Activated CD8-positive, alpha-beta memory T cell treated with anti-CD3 and anti-CD28 coated beads, Interleukin-2, amount 10 ng/mL, durations not matched to agents 7 days and 5 days (primary cell): ENCODE measurements at regions of chr3 and their contacts with region 1.

Region 1: DNA sequence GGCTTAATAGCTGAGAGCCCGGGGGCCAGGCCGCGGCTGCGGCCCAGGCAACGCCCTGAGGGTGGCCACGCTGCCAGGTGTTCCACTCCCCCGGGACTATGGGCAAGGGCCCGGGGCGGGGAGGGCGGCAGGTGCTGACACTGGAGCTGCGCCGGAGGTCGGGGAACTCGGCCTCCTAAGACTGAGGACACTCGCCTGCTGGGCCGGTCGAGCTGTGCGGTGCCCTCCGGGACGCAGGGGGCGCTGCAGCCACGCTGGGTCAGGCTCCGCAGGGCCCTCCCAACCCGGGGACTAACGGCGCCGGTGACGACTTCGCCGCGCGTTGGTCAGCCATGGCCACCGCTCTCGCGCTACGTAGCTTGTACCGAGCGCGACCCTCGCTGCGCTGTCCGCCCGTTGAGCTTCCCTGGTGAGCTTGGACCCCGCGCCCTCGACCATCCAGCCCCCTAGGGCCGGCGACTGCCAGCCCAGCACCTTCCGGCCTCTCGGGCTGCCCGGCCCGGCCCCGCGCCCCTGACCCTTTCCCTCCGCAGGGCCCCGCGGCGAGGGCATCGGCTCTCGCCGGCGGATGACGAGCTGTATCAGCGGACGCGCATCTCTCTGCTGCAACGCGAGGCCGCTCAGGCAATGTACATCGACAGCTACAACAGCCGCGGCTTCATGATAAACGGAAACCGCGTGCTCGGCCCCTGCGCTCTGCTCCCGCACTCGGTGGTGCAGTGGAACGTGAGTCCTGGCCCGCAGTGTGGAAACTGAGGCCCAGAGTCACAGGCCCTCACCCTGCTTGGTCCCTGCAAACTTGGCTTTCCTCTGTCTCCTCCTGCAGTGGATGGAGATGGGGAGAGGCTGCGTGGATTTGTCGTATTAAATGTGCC is at the start of gene NDUFAF3:
- DNase-seq: peak; percentile 95
- ATAC-seq: peak; percentile 72
- H3K4me3 Mint-ChIP-seq: peak within 1 kb of the TSS; percentile 90
- H3K27ac Mint-ChIP-seq: peak within 1 kb of the TSS; percentile 98
- H3K4me1 Mint-ChIP-seq: peaks cover 61% of the 10 kb centered on the region
- H3K27me3 Mint-ChIP-seq: no peaks in the 10 kb centered on the region
- total RNA-seq, gene NDUFAF3: 94.3 to 101 TPM

Region 2: DNA sequence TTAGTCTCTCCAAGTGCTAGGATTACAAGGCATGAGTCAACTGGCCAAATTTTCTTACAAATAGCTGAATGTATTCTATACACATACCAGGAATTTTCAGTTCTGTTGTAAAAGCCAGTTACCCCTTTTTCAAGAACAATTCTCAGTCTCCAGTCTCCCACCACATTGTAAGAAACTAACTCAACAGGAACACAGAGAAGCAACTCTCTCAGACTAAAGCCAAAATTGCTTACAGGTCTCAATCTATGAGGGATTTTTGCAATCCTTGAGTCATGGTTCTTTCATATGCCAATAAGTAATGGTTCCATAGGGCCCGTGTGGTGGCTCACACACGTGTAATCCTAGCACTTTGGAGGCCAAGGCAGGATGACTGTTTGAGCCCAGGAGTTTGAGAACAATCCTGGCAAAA is 313.6 kb before region 1 on chr3:
- CTCF ChIA-PET with region 1: no interaction called
- DNase-seq: no peak
- ATAC-seq: no peak
- H3K4me3 Mint-ChIP-seq: no peak overlapping the region
- H3K27ac Mint-ChIP-seq: peak overlapping the region; percentile 37
- H3K4me1 Mint-ChIP-seq: peaks cover 39% of the 10 kb centered on the region
- H3K27me3 Mint-ChIP-seq: no peaks in the 10 kb centered on the region

Region 3: DNA sequence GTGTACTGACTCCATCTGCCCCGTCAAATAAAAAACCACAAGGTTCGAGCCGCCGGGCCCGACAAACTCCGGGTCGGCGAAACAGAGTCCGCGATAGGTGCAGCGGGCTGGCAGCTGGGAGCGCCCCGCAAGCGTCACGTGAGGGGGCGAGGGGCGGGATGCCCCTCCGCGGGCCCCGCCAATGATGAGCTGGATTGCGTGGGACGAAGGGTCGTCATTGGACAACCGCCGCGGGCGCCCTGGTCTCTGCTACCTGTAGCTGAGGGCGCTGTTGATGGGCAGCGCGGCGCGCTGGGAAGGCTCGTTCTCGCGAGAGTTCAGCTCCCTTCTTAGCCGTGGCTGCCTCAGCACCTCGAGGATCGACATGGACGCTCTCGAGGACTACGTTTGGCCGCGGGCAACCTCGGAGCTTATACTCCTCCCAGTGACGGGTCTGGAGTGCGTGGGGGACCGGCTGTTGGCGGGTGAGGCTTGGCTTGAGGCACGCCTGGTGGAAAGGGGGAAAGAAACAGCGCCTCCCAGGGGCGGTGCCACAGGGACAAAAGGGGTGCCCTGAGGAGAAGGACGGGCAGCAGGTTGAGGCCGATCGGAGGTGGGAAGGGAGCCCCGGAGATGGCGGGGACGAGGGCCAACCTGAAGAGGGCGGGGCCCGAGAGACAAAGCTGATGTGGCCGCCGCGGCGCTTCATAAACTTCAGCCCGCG is 14.8 kb before region 1 on chr3 and contains the start of gene WDR6:
- CTCF ChIA-PET with region 1: interaction called, 101 read pairs
- DNase-seq: peak; percentile 99
- ATAC-seq: peak; percentile 91
- H3K4me3 Mint-ChIP-seq: peak within 1 kb of the TSS; percentile 87
- H3K27ac Mint-ChIP-seq: peak within 1 kb of the TSS; percentile 95
- H3K4me1 Mint-ChIP-seq: peaks cover 23% of the 10 kb centered on the region
- H3K27me3 Mint-ChIP-seq: no peaks in the 10 kb centered on the region
- total RNA-seq, gene WDR6: 130 to 154 TPM

Region 4: GRCh38 chr3:49032646-49033304 is 10.7 kb after region 1 on chr3:
- CTCF ChIA-PET with region 1: interaction called, 16 read pairs
- DNase-seq: no peak
- ATAC-seq: no peak
- H3K4me3 Mint-ChIP-seq: no peak overlapping the region
- H3K27ac Mint-ChIP-seq: no peak overlapping the region
- H3K4me1 Mint-ChIP-seq: peaks cover 15% of the 10 kb centered on the region
- H3K27me3 Mint-ChIP-seq: no peaks in the 10 kb centered on the region